ENCODE measurements at regions of chr15 and their contacts with region 1.

Region 1: DNA sequence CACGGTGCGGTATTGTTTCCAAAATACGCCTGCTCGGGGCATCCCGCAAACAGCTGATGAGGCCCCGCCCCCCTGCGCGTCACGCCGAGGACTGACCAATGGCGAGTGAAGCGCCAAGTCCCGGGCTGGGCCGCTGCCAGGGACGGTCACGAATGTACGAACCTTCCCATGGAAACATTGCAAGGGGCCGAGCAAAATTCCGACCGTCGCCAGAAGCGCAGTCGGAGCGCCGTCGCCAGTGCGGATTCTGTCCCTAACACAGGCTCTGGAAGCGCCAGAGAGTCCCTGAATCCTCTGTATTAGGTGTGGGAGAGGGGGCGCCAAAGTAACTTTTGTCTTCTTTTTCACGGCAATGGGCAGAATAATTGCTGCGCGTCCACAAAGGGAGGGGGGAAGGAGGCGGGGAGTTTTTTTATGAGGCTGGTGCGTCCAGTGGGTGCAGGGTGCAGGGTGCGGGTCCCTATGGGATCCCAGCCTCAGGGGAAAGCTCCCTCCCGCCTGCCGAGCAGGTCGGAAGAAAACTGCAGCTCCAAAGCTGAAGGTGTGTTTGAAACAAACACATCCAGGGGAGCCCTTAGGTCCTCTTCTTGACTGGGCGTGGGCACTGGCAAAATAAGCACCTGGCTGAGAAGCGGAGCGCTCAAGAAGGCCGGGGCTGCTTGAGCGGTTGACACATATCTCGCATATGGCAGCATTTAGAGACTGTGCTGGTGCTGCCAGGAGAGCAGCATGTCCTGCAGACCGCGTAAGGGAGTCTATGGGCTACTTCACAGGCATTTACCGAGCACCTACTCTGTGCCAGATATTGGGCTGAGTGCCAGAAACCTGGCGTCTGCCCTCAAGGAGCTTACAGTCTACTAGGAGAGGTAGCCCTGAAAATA is at the start of gene BMF:
- DNase-seq: peak; percentile 97
- ATAC-seq: peak; percentile 49
- H3K4me3 Mint-ChIP-seq: peak within 1 kb of the TSS; percentile 94
- H3K27ac Mint-ChIP-seq: peak within 1 kb of the TSS; percentile 92
- H3K4me1 Mint-ChIP-seq: peaks cover 60% of the 10 kb centered on the region
- H3K27me3 Mint-ChIP-seq: no peaks in the 10 kb centered on the region
- CTCF ChIP-seq: no peak
- total RNA-seq, gene BMF: 353 and 376 TPM in 2 replicates

Region 2: GRCh38 chr15:39465843-39466749 is 643.0 kb before region 1 on chr15:
- CTCF ChIA-PET with region 1: no interaction called
- POLR2A ChIA-PET with region 1: no interaction called
- intact Hi-C with region 1: no loop called
- DNase-seq: no peak
- ATAC-seq: no peak
- H3K4me3 Mint-ChIP-seq: no peak overlapping the region
- H3K27ac Mint-ChIP-seq: no peak overlapping the region
- H3K4me1 Mint-ChIP-seq: no peaks in the 10 kb centered on the region
- H3K27me3 Mint-ChIP-seq: no peaks in the 10 kb centered on the region
- CTCF ChIP-seq: no peak

Region 3: GRCh38 chr15:39488516-39488915 is 620.6 kb before region 1 on chr15:
- CTCF ChIA-PET with region 1: no interaction called
- POLR2A ChIA-PET with region 1: no interaction called
- intact Hi-C with region 1: no loop called
- DNase-seq: no peak
- ATAC-seq: no peak
- H3K4me3 Mint-ChIP-seq: no peak overlapping the region
- H3K27ac Mint-ChIP-seq: no peak overlapping the region
- H3K4me1 Mint-ChIP-seq: no peaks in the 10 kb centered on the region
- H3K27me3 Mint-ChIP-seq: no peaks in the 10 kb centered on the region
- CTCF ChIP-seq: no peak

Region 4: GRCh38 chr15:39934397-39935071 is 174.6 kb before region 1 on chr15:
- CTCF ChIA-PET with region 1: no interaction called
- POLR2A ChIA-PET with region 1: interaction called, 3 read pairs
- intact Hi-C with region 1: loop called (anchors 5 kb)
- DNase-seq: no peak
- ATAC-seq: no peak
- H3K4me3 Mint-ChIP-seq: peak overlapping the region; percentile 96
- H3K27ac Mint-ChIP-seq: peak overlapping the region; percentile 50
- H3K4me1 Mint-ChIP-seq: peaks cover 32% of the 10 kb centered on the region
- H3K27me3 Mint-ChIP-seq: peaks cover 5% of the 10 kb centered on the region
- CTCF ChIP-seq: no peak

Region 5: DNA sequence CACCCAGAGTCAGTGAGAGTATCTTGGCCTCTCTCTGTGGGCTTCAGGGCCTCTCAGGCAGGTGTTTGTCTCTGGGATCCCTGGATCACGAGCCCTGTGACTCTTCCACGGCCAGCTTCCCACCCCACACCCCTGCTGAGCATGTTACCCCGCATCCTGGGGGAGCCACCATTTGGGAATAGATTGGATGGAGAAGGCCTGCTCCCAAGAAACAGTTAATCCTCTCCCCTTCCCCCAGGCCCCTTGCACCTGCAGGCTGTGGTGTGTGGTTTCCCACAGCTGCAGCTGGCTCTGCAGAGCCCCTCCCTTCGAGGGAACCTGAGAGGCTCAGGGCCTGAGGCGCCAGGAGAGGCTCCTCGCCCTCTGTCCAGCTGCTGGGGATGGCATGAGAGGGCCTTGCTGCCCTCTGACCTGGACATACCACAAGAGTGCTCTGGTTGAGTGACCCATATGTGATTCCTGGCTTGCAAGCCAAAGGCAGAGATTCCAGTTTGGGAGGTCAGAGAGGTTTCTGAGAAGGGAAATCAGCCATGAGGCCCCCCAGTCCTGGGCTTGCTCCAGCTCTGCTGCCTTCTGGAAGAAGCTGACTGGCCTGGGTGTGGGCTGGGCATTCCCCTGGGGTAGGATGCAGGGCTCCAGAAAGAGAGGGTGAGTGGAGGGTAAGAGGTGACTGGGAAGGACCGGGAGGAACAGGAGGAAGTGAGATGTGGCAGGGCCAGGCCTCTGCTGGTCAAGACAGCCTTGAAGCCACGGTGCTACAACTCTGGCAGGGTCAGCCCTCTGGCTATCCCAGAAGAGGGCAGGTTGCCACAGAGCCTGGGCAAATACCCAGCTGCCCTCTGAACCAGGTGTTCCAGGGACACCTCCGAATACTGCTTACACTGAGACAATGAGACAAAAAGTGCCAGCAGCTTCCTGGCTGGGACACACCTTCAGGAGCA is 54.2 kb before region 1 on chr15:
- CTCF ChIA-PET with region 1: interaction called, 519 read pairs
- POLR2A ChIA-PET with region 1: interaction called, 1,329 read pairs
- intact Hi-C with region 1: no loop called
- DNase-seq: peak; percentile 55
- ATAC-seq: peak; percentile 68
- H3K4me3 Mint-ChIP-seq: peak overlapping the region; percentile 61
- H3K27ac Mint-ChIP-seq: peak overlapping the region; percentile 91
- H3K4me1 Mint-ChIP-seq: peaks cover 67% of the 10 kb centered on the region
- H3K27me3 Mint-ChIP-seq: no peaks in the 10 kb centered on the region
- CTCF ChIP-seq: no peak

Region 6: DNA sequence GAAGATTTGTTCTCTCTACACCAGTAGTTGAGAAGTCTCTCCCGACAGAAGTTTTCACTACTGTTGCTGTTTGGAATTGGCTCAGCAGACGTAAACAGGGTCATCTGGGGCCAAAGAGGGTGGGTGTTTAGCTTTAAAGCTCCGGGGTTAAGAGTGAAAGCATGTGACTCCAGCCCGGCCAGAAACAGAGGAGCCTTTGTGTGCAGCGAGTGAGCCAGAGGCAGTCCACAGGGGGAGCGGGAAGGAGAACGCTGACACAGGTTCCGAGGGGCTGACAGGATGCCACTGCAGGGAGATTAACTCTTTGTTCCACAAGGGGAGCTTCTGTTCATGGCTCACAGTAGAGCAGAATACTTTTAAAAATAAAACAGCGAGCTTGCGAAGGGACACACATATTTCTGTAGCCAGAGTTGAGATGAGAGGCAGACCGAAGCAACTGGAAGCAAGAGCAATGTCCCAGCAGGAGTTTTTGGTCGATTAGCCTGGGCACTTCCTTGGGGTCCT is 27.4 kb before region 1 on chr15:
- CTCF ChIA-PET with region 1: interaction called, 45 read pairs
- POLR2A ChIA-PET with region 1: interaction called, 504 read pairs
- intact Hi-C with region 1: loop called (anchors 1 kb)
- DNase-seq: no peak
- ATAC-seq: no peak
- H3K4me3 Mint-ChIP-seq: peak overlapping the region; percentile 78
- H3K27ac Mint-ChIP-seq: peak overlapping the region; percentile 89
- H3K4me1 Mint-ChIP-seq: peaks cover 60% of the 10 kb centered on the region
- H3K27me3 Mint-ChIP-seq: no peaks in the 10 kb centered on the region
- CTCF ChIP-seq: no peak

Region 7: DNA sequence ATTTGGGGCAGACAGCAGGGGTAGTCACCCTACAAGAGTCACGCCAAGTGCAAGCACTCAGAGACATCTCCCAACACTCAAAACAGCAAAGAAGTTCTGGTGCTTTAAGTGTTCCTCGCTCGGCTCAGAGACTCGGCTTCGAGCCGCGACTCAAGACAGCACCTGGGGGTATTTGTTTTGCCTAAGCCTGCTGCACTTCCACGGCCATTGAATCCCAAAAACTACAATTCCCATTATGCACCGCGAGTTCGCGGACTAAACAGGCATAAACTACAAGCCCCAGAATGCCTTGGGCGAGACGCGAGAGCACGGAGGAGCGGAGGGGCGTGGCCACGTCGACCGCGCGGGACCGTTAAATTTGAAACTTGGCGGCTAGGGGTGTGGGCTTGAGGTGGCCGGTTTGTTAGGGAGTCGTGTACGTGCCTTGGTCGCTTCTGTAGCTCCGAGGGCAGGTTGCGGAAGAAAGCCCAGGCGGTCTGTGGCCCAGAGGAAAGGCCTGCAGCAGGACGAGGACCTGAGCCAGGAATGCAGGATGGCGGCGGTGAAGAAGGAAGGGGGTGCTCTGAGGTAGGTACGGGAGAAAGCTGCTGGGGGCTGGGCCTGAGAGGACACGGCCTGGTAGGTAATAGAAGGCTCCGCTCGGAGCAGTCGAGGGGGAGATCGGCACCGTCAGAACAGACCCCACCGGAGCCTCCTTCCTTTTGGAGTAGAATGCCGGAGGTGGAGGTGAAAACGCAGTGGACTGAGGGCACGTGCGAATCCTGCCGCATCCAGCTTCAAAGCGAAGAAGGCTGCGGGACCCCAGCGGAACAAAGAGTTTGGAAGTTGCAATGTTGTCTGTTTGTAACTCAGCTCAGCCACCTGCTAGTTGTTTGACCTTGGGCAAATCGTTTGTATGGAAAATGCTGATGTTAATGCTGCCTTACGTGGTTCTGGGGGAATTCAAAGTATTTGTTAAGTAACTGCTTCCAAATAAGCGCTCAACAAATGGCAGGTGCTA is 51.9 kb after region 1 on chr15 and contains the start of gene BUB1B:
- CTCF ChIA-PET with region 1: interaction called, 9 read pairs
- POLR2A ChIA-PET with region 1: interaction called, 23 read pairs
- intact Hi-C with region 1: loop called (anchors 2 kb)
- DNase-seq: peak; percentile 88
- ATAC-seq: peak; percentile 97
- H3K4me3 Mint-ChIP-seq: no peak within 1 kb of the TSS
- H3K27ac Mint-ChIP-seq: no peak within 1 kb of the TSS
- H3K4me1 Mint-ChIP-seq: peaks cover 10% of the 10 kb centered on the region
- H3K27me3 Mint-ChIP-seq: no peaks in the 10 kb centered on the region
- CTCF ChIP-seq: no peak
- total RNA-seq, gene BUB1B: 3.9 and 4.2 TPM in 2 replicates

Region 8: DNA sequence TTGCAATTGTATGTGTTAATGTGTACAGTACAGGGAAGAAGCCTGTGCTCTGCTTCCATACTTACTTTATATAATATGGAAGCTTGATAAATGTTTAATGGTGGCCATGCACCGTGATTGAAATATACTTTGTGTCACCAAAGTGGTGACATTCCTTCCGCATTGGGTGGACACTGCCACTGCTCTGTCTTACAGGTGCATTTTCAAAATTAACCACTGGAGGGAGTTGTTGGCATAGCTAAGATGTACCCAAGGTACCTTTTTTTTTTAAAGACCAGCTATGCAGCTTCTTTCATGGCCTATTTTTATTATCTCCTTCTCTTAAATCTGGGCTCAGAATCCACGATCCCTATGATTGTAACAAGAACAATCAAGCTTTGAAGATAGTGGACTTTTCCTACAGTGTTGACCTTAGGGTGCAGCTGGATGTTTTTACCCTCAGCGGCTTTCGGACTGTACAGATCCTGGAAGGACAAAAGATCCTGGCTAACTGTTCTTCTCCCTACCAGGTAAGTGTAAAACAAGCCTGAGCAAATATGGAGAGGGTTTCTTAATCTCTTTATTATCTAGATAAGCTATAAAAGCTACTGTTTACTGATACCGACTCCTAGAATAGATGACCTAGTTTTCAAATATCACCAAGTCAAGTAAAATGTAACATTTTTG is 108.2 kb after region 1 on chr15:
- CTCF ChIA-PET with region 1: interaction called, 10 read pairs
- POLR2A ChIA-PET with region 1: interaction called, 8 read pairs
- intact Hi-C with region 1: loop called (anchors 1 kb)
- DNase-seq: no peak
- ATAC-seq: peak; percentile 100
- H3K4me3 Mint-ChIP-seq: no peak overlapping the region
- H3K27ac Mint-ChIP-seq: no peak overlapping the region
- H3K4me1 Mint-ChIP-seq: no peaks in the 10 kb centered on the region
- H3K27me3 Mint-ChIP-seq: no peaks in the 10 kb centered on the region
- CTCF ChIP-seq: peak; percentile 41

Region 9: GRCh38 chr15:40323239-40323952 is 214.3 kb after region 1 on chr15 and contains the start of gene INAFM2:
- CTCF ChIA-PET with region 1: no interaction called
- POLR2A ChIA-PET with region 1: no interaction called
- intact Hi-C with region 1: loop called (anchors 5 kb)
- DNase-seq: peak; percentile 88
- ATAC-seq: peak; percentile 92
- H3K4me3 Mint-ChIP-seq: peak within 1 kb of the TSS; percentile 80
- H3K27ac Mint-ChIP-seq: peak within 1 kb of the TSS; percentile 65
- H3K4me1 Mint-ChIP-seq: peaks cover 29% of the 10 kb centered on the region
- H3K27me3 Mint-ChIP-seq: no peaks in the 10 kb centered on the region
- CTCF ChIP-seq: no peak
- total RNA-seq, gene INAFM2: 9.5 TPM in 2 replicates

Measured in activated B cell treated with CpG ODN at 0.5 μM for 24 hours (primary cell).